ENCODE measurements at regions of chr13 and their contacts with region 1.

Region 1: DNA sequence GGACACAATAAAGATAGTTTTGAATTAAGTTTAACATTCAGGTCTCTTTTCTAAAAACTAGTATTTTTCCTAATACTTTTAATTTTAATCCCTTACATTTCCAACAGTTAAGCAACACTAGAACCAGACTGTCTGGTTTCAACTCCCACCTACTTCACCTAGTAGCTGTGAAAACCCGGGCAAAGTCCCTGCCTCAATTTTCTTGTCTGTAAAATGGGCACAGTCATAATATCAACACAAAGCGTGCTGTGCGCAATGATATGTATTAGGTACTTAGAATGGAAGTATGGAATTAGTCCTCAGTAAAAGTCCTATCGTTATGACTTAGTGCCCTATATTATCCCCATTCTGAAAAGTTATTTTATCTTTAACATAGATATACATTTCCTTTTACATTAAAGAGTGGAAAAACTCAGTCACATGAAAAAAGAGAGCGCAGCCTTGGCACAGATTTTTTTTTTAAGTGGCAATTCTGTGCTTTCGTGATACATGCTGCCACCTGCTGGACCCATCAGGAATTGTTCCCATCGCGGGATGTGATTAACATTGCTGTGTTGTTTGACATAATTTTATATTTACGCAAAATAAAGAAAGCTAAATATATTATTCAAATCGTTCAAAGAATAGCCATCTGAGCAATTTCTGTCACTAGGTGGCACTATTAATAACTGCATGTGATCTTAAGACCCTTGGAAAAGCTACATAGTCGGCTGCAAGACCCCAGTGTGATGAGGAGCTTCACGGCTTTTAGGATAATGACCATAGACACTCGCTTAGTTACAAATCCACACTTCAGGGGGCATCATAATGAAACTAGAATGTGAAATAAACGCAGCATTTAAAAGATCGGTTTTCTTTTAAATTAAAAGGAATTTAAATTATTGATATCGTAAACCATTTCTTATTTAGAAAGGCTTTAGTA is 59.9 kb downstream of the LIG4 start:
- DNase-seq: no peak
- H3K4me3 ChIP-seq: no peak overlapping the region
- CTCF ChIP-seq: peak; percentile 50

Region 2: DNA sequence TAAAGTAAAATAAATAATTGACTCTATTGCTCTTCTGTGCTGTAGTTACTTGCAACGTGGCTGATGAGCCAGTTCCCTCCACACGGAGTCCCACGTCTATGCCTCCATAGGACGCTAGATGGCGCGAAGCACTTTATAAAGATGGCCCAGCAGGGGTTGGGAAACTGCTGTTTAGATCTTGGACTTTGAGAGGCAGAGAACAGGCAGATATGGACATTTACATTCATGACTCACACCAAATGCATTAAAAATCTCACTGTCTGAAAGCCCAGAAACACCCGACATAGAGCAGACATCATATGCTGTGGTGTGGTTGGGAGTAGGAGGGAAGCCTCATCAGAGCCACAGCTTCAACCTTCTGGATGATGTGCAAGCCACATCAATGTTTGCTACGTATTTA is 944.4 kb before region 1 on chr13:
- CTCF ChIA-PET with region 1: interaction called, 16 read pairs
- POLR2A ChIA-PET with region 1: no interaction called
- DNase-seq: peak; percentile 26
- H3K4me3 ChIP-seq: no peak overlapping the region
- CTCF ChIP-seq: peak; percentile 72

Region 3: DNA sequence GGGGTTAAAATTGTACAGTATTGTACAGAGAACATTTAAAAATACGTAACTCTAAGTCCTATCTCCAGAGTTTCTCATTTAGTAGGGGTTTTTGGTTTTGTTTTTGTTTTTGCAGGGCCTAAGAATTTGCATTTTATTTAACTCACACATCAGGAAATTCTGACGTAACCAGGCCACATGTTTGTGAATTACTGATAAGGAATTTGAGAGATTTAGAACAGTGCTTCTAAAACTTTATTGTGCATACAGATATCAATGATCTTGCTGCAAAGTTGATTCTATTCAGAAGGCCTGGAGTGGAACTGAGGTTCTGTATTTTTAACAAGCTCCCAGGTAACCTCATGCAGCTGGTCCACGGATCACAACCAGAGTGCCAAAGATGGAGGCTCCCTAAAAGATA is 10.6 kb after region 1 on chr13:
- CTCF ChIA-PET with region 1: interaction called, 16 read pairs
- POLR2A ChIA-PET with region 1: no interaction called
- DNase-seq: no peak
- H3K4me3 ChIP-seq: no peak overlapping the region
- CTCF ChIP-seq: no peak